Caco-2 (cell line): ENCODE measurements at regions of chr6 and their contacts with region 1.

Region 1: GRCh38 chr6:45714741-45715507 is 300.7 kb downstream of the CLIC5 start:
- DNase-seq: peak; percentile 43 to 70
- H3K4me3 ChIP-seq: no peak overlapping the region
- H3K4me3 Mint-ChIP-seq: no peak overlapping the region
- H3K27ac Mint-ChIP-seq: no peak overlapping the region
- H3K4me1 ChIP-seq: no peaks in the 10 kb centered on the region
- H3K4me1 Mint-ChIP-seq: no peaks in the 10 kb centered on the region
- H3K27me3 ChIP-seq: no peaks in the 10 kb centered on the region
- H3K27me3 Mint-ChIP-seq: peaks cover 4% of the 10 kb centered on the region
- CTCF ChIP-seq: peak; percentile 71 to 84

Region 2: DNA sequence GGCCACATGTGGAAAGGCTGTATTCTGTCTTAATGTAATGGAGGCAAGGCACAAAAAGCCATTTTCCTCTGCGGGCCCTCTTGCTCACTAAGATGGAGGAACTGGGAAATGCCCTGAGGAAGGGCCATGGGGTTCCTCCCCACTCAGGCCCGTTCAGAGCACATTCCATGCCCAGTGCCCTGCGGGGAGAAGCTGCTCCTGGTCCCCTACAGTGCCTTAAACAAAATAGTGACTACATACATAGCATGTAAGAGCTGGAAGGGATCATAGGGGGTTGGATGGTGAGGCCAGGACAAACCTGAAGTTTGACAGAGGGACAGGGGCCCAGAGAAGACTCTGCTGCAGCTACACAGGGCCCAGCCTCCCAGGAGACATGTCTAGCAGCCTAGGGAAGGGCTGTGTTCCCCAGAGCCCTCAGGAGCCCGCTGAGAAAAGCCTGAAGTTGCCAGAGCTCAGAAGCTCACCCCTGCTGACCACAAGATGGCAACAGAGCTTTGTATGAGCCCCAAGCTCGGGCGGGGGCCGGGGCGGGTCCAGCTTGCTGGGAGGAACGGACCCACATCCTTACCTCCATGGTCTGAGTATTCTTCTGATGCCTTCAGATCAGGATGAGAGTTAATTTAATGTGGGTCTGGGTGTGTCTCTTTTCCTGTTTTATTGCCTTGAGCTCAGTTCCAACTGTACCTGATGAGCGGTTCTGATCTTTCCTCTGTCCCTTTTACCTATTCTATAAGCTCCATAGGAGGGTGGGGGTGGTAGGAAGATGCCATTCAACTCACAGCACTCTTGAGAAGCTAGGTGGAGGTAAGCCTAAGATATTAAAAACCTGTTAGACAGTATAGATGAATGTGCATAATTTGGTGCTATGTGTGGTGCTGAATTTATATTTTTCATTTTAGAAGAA is 1084.5 kb before region 1 on chr6:
- CTCF ChIA-PET with region 1: interaction called, 14 read pairs
- POLR2A ChIA-PET with region 1: no interaction called
- intact Hi-C with region 1: no loop called
- DNase-seq: peak; percentile 55 to 60
- H3K4me3 ChIP-seq: no peak overlapping the region
- H3K4me3 Mint-ChIP-seq: no peak overlapping the region
- H3K27ac Mint-ChIP-seq: no peak overlapping the region
- H3K4me1 ChIP-seq: no peaks in the 10 kb centered on the region
- H3K4me1 Mint-ChIP-seq: peaks cover 9% of the 10 kb centered on the region
- H3K27me3 ChIP-seq: no peaks in the 10 kb centered on the region; the same call in 1 of the 2 replicates
- H3K27me3 Mint-ChIP-seq: peaks cover 11% of the 10 kb centered on the region
- CTCF ChIP-seq: peak; percentile 33 to 83

Region 3: DNA sequence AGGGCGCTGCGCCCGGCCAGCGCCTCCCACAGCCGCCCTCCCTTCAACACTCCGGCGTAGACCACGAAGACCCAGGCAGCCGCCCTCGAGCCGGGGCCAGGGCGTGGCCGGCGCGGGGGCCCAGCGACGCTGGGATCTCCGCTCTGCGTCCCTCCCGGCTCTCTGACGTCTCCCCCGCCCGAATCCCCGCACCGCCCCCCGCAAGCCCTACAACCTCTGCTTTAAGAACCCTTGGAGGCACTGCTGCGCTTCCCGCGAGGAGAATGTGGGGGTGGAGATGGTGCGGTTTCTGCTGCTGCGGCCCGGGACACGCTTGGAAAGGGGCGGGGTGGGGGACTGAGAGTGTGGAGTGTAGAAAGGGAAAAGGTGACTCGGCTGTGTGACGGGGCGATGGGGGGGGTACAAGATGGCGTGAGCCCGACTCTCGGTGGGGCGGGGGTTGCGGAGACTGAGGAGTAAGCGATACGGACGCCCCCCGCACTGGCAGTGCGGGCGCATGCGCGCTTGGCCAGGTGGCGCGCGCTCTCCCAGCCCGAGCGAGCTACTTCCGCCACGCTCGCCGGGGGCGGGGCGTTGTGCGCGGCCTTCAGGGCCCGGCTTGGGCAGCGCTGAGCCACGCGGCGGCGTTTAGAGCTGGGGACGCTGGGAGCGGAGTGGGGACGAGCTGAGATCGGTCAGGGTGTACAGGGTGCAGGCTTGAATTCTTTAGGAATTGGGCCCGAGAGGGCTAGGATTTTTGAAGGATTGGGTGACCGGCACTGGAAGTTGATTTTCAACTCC is 337.2 kb before region 1 on chr6 and contains the start of gene SUPT3H:
- CTCF ChIA-PET with region 1: interaction called, 11 read pairs
- POLR2A ChIA-PET with region 1: no interaction called
- intact Hi-C with region 1: loop called (anchors 2 kb)
- DNase-seq: peak; percentile 92 to 94
- H3K4me3 ChIP-seq: peak within 1 kb of the TSS; percentile 89
- H3K4me3 Mint-ChIP-seq: peak within 1 kb of the TSS; percentile 99
- H3K27ac Mint-ChIP-seq: peak within 1 kb of the TSS; percentile 98
- H3K4me1 ChIP-seq: peaks cover 9% of the 10 kb centered on the region
- H3K4me1 Mint-ChIP-seq: peaks cover 7% of the 10 kb centered on the region
- H3K27me3 ChIP-seq: no peaks in the 10 kb centered on the region
- H3K27me3 Mint-ChIP-seq: no peaks in the 10 kb centered on the region
- CTCF ChIP-seq: peak in 1 of 2 experiments; percentile 22
- total RNA-seq, gene SUPT3H: 13.2 and 15.7 TPM in 2 replicates

Region 4: GRCh38 chr6:45500924-45501816 is 213.8 kb before region 1 on chr6:
- CTCF ChIA-PET with region 1: interaction called, 21 read pairs
- POLR2A ChIA-PET with region 1: no interaction called
- intact Hi-C with region 1: loop called (anchors 1 kb)
- DNase-seq: peak; percentile 35 to 43
- H3K4me3 ChIP-seq: no peak overlapping the region
- H3K4me3 Mint-ChIP-seq: no peak overlapping the region
- H3K27ac Mint-ChIP-seq: no peak overlapping the region
- H3K4me1 ChIP-seq: 0 out of 2 replicates have a peak, but pooled peaks cover 3% of the 10 kb centered on the region
- H3K4me1 Mint-ChIP-seq: peaks cover 17% of the 10 kb centered on the region
- H3K27me3 ChIP-seq: no peaks in the 10 kb centered on the region
- H3K27me3 Mint-ChIP-seq: peaks cover 3% of the 10 kb centered on the region
- CTCF ChIP-seq: peak in 1 of 2 experiments; percentile 53

Region 5: DNA sequence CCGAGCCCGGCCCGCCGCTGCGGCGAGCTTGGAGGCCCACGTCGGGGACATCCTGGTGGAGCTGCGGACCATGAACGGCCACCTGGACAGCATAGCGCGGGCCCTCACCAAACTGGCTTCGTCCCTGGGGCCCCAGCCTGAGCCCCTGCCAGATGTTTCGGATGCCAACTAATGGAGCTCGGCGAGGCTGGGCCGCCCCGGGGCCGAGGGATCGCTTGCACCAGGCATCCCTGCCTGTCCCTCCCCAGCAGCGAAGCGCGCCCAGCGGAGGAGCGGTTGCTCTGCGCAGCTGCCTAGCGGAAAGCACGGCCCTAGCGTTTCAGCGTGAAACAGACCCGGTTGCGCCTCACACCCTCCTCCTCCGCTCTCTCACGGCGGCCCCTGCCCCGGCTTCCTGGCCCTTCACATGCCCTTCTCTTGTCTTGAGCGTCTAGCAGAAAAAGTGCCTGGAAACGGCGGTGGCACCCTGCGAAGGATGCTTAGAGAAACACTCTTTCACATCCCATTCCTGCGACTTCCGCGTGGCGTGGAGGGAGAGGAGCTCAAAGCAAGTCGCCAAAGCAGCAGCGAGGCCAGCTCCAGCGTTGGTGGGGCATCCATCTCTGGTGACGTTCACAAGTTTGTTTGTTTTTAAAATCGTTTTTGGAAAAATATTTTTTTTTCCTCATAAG is 51.2 kb before region 1 on chr6:
- CTCF ChIA-PET with region 1: no interaction called
- POLR2A ChIA-PET with region 1: no interaction called
- intact Hi-C with region 1: no loop called
- DNase-seq: no peak
- H3K4me3 ChIP-seq: no peak overlapping the region
- H3K4me3 Mint-ChIP-seq: no peak overlapping the region
- H3K27ac Mint-ChIP-seq: no peak overlapping the region
- H3K4me1 ChIP-seq: no peaks in the 10 kb centered on the region
- H3K4me1 Mint-ChIP-seq: no peaks in the 10 kb centered on the region
- H3K27me3 ChIP-seq: no peaks in the 10 kb centered on the region; the same call in 1 of the 2 replicates
- H3K27me3 Mint-ChIP-seq: no peaks in the 10 kb centered on the region
- CTCF ChIP-seq: no peak

Region 6: GRCh38 chr6:46032110-46032998 is 317.4 kb after region 1 on chr6:
- CTCF ChIA-PET with region 1: no interaction called
- POLR2A ChIA-PET with region 1: no interaction called
- intact Hi-C with region 1: no loop called
- DNase-seq: no peak
- H3K4me3 ChIP-seq: no peak overlapping the region
- H3K4me3 Mint-ChIP-seq: no peak overlapping the region
- H3K27ac Mint-ChIP-seq: no peak overlapping the region
- H3K4me1 ChIP-seq: no peaks in the 10 kb centered on the region
- H3K4me1 Mint-ChIP-seq: no peaks in the 10 kb centered on the region
- H3K27me3 ChIP-seq: no peaks in the 10 kb centered on the region
- H3K27me3 Mint-ChIP-seq: peaks cover 5% of the 10 kb centered on the region
- CTCF ChIP-seq: no peak